Calu3 (cell line): ENCODE measurements at regions of chr16 and their contacts with region 1.

Region 1: DNA sequence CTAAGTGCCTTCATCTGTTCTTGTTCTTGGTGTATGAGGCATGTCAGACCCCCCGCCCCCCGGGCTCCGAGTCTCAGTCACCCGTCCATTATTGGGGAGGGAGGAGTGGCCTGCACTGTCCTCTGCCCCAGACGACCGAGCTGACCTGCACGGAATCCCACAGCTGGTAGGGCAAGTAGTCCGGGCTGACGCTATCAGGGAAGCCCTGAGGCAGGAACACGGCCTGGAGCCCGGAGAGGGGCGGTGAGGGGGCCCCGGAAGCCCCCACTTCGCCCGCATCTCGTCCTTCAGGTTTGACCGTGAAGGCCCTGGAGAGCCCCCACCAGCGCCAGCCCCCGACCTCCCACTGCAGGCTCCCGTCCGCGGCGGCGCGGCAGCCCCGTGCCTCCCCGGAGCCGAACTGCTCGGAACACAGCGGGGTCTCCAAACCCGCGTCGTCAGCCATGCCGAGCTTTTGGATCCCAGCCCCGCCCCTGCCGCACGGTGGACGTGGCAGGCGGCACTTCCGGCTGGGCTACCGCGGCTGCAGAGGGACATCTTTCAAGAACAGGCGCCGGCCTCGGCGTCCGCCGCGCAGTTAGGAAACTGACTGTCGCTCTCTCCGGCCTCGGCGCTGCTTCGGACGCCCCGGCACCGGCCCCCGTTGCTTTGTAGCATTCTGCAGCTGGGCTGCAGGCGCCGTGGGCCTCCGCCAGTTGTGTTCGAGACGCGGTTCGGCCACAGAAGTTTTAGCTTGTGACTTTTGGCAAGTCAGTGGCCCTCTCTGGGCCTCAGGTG is at the start of gene RUSF1:
- DNase-seq: peak; percentile 93
- H3K4me3 Mint-ChIP-seq: peak within 1 kb of the TSS; percentile 88
- H3K27ac Mint-ChIP-seq: peak within 1 kb of the TSS; percentile 96
- H3K4me1 Mint-ChIP-seq: peaks cover 8% of the 10 kb centered on the region
- H3K27me3 Mint-ChIP-seq: peaks cover 10% of the 10 kb centered on the region
- CTCF ChIP-seq: no peak
- total RNA-seq, gene RUSF1: 96.0 and 105 TPM in 2 replicates

Region 2: DNA sequence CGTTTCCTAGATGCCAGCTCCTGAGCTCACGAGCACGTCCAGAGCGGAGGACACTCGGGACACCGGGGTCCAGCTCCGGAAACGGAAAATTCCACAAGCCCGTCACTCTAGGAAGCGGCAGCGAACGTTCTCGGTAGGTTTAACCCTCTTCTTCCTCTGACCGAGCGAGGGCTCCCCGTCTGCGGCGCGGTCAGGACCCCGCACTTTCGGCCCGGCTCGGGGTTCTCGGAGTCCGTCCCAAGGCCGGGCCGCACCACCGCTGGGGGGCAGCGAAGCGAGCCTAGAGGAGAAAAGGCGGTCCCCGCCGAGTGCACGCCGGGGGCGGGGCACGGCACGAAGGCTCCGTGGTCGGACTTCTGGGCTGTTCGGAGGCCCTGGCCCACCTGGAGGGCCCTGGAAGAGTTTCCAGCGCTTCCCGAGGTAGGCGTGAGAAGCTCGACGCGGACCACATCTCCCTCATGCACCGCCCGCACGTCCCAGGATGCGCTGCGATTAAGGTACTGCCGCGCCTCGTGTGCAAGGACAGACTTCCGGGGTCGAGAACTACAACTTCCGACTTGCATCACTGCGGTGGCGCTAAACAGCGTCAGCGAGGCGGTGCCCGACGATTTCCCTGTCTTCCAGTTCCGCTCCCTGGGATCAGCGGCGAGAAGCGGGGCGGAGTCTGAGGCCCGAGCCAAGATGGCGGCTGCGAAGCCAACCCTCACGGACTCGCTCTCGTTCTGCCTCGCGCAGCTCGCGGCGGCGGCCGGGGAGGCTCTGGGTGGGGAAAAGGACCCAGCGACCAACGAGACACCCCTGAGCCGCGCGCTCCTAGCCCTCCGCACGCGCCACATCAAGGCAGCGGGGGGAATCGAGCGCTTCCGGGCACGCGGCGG is 49.0 kb before region 1 on chr16 and contains the start of gene ARMC5:
- CTCF ChIA-PET with region 1: interaction called, 3 read pairs
- intact Hi-C with region 1: loop called (anchors 5 kb)
- DNase-seq: peak; percentile 97
- H3K4me3 Mint-ChIP-seq: peak within 1 kb of the TSS; percentile 86
- H3K27ac Mint-ChIP-seq: peak within 1 kb of the TSS; percentile 93
- H3K4me1 Mint-ChIP-seq: peaks cover 18% of the 10 kb centered on the region
- H3K27me3 Mint-ChIP-seq: no peaks in the 10 kb centered on the region
- CTCF ChIP-seq: peak; percentile 58
- total RNA-seq, gene ARMC5: 13.2 and 13.6 TPM in 2 replicates

Region 3: GRCh38 chr16:31696968-31697743 is 189.0 kb after region 1 on chr16:
- CTCF ChIA-PET with region 1: no interaction called
- intact Hi-C with region 1: loop called (anchors 5 kb)
- DNase-seq: no peak
- H3K4me3 Mint-ChIP-seq: no peak overlapping the region
- H3K27ac Mint-ChIP-seq: no peak overlapping the region
- H3K4me1 Mint-ChIP-seq: peaks cover 11% of the 10 kb centered on the region
- H3K27me3 Mint-ChIP-seq: no peaks in the 10 kb centered on the region
- CTCF ChIP-seq: peak; percentile 27

Region 4: GRCh38 chr16:31874366-31875111 is 366.4 kb after region 1 on chr16:
- CTCF ChIA-PET with region 1: no interaction called
- intact Hi-C with region 1: loop called (anchors 5 kb)
- DNase-seq: peak; percentile 59
- H3K4me3 Mint-ChIP-seq: peak overlapping the region; percentile 74
- H3K27ac Mint-ChIP-seq: peak overlapping the region; percentile 96
- H3K4me1 Mint-ChIP-seq: peaks cover 17% of the 10 kb centered on the region
- H3K27me3 Mint-ChIP-seq: peaks cover 15% of the 10 kb centered on the region
- CTCF ChIP-seq: no peak